ENCODE measurements at regions of chr6 and their contacts with region 1.

Region 1: GRCh38 chr6:26065952-26066380 is 21.3 kb upstream of the HFE start:
- DNase-seq: peak; percentile 73
- ATAC-seq: peak; percentile 92
- H3K4me3 ChIP-seq: 0 out of 2 replicates have a peak overlapping the region, but pooled peaks have one; percentile 24
- H3K27ac ChIP-seq: no peak overlapping the region; the same call in 1 of the 2 replicates
- H3K4me1 ChIP-seq: no peaks in the 10 kb centered on the region
- H3K27me3 ChIP-seq: no peaks in the 10 kb centered on the region
- CTCF ChIP-seq: peak; percentile 88 to 98 (median 89); a peak in 5 of 6 replicates
- EP300 ChIP-seq: no peak
- POLR2A ChIP-seq: no peak
- RAD21 ChIP-seq: peak; percentile 94

Region 2: DNA sequence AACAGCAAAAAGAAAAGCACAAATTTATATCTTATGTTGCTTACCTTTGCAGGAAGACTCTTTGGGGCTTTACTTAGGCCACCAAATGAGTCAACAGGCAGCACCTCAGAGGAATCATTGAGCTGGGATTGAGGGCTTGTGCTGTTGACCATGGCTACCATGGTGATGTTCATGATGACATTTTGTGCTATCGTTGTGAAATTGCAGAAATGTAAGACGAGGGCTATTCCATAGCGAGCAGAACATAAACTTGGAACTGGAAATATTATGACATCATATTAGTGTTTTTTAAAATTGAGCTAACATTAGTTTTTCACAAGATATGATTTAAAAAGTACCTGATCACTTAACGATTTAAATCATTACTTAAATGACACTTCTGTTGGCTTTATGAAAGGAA is 203.8 kb before region 1 on chr6:
- CTCF ChIA-PET with region 1: no interaction called
- POLR2A ChIA-PET with region 1: no interaction called
- RAD21 ChIA-PET with region 1: no interaction called
- SMC1A ChIA-PET with region 1: no interaction called
- in situ Hi-C with region 1: no loop called
- intact Hi-C with region 1: no loop called
- DNase-seq: no peak
- ATAC-seq: no peak
- H3K4me3 ChIP-seq: no peak overlapping the region
- H3K27ac ChIP-seq: no peak overlapping the region
- H3K4me1 ChIP-seq: no peaks in the 10 kb centered on the region
- H3K27me3 ChIP-seq: peaks cover 0 to 2% of the 10 kb centered on the region in 2 experiments; a peak in 3 of 4 replicates
- CTCF ChIP-seq: no peak
- EP300 ChIP-seq: no peak
- POLR2A ChIP-seq: no peak
- RAD21 ChIP-seq: no peak

Region 3: DNA sequence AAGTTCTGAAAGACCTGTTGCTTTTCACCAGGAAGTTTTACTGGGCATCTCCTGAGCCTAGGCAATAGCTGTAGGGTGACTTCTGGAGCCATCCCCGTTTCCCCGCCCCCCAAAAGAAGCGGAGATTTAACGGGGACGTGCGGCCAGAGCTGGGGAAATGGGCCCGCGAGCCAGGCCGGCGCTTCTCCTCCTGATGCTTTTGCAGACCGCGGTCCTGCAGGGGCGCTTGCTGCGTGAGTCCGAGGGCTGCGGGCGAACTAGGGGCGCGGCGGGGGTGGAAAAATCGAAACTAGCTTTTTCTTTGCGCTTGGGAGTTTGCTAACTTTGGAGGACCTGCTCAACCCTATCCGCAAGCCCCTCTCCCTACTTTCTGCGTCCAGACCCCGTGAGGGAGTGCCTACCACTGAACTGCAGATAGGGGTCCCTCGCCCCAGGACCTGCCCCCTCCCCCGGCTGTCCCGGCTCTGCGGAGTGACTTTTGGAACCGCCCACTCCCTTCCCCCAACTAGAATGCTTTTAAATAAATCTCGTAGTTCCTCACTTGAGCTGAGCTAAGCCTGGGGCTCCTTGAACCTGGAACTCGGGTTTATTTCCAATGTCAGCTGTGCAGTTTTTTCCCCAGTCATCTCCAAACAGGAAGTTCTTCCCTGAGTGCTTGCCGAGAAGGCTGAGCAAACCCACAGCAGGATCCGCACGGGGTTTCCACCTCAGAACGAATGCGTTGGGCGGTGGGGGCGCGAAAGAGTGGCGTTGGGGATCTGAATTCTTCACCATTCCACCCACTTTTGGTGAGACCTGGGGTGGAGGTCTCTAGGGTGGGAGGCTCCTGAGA is 21.5 kb after region 1 on chr6 and contains the start of gene HFE:
- CTCF ChIA-PET with region 1: interaction called, 897 read pairs
- POLR2A ChIA-PET with region 1: interaction called, 21 read pairs
- RAD21 ChIA-PET with region 1: interaction called, 286 read pairs
- SMC1A ChIA-PET with region 1: interaction called, 645 read pairs
- in situ Hi-C with region 1: no loop called
- intact Hi-C with region 1: no loop called
- DNase-seq: no peak
- ATAC-seq: peak; percentile 64
- H3K4me3 ChIP-seq: peak within 1 kb of the TSS; percentile 78
- H3K27ac ChIP-seq: peak within 1 kb of the TSS; percentile 75
- H3K4me1 ChIP-seq: peaks cover 15% of the 10 kb centered on the region
- H3K27me3 ChIP-seq: no peaks in the 10 kb centered on the region
- CTCF ChIP-seq: no peak
- EP300 ChIP-seq: no peak
- POLR2A ChIP-seq: no peak
- RAD21 ChIP-seq: no peak
- polyA plus RNA-seq, gene HFE: 0.52 to 1.2 TPM

Region 4: DNA sequence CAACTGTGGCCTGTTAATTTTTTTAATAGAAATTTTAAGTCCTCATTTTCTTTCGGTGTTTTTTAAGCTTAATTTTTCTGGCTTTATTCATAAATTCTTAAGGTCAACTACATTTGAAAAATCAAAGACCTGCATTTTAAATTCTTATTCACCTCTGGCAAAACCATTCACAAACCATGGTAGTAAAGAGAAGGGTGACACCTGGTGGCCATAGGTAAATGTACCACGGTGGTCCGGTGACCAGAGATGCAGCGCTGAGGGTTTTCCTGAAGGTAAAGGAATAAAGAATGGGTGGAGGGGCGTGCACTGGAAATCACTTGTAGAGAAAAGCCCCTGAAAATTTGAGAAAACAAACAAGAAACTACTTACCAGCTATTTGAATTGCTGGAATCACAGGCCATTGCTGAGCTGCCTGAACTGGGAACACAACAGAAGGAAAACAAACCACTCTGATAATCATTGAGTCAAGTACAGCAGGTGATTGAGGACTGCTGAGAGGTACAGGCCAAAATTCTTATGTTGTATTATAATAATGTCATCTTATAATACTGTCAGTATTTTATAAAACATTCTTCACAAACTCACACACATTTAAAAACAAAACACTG is 31.4 kb after region 1 on chr6:
- CTCF ChIA-PET with region 1: interaction called, 897 read pairs
- POLR2A ChIA-PET with region 1: interaction called, 19 read pairs
- RAD21 ChIA-PET with region 1: interaction called, 286 read pairs
- SMC1A ChIA-PET with region 1: interaction called, 645 read pairs
- in situ Hi-C with region 1: loop called (anchors 5 kb)
- intact Hi-C with region 1: loop called (anchors 1 kb)
- DNase-seq: no peak
- ATAC-seq: peak; percentile 92
- H3K4me3 ChIP-seq: no peak overlapping the region
- H3K27ac ChIP-seq: no peak overlapping the region
- H3K4me1 ChIP-seq: peaks cover 4% of the 10 kb centered on the region
- H3K27me3 ChIP-seq: no peaks in the 10 kb centered on the region
- CTCF ChIP-seq: peak; percentile 54 to 82 (median 65); a peak in 5 of 6 replicates
- EP300 ChIP-seq: no peak
- POLR2A ChIP-seq: no peak
- RAD21 ChIP-seq: peak; percentile 96

Region 5: DNA sequence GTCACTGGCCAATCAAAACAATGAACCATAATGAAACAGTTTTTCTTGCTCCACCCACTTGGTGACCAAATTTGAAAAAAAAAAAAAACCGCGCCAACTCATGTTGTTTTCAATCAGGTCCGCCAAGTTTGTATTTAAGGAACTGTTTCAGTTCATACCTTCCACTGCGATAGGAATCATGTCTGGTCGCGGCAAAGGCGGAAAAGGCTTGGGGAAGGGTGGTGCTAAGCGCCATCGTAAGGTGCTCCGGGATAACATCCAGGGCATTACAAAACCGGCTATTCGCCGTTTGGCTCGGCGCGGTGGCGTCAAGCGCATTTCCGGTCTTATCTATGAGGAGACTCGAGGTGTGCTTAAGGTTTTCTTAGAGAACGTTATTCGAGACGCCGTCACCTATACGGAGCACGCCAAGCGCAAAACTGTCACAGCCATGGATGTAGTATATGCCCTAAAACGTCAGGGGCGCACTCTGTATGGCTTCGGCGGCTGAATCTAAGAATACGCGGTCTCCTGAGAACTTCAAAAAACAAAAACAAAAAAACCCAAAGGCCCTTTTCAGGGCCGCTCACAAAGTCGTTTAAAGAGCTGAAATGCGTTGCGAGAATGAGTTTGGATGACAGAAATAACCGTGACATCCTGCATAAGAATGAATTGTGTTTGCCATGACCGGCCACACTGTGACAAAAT is 37.9 kb after region 1 on chr6:
- CTCF ChIA-PET with region 1: interaction called, 897 read pairs
- POLR2A ChIA-PET with region 1: interaction called, 9 read pairs
- RAD21 ChIA-PET with region 1: interaction called, 286 read pairs
- SMC1A ChIA-PET with region 1: interaction called, 645 read pairs
- in situ Hi-C with region 1: loop called (anchors 5 kb)
- intact Hi-C with region 1: loop called (anchors 1 kb)
- DNase-seq: peak; percentile 99
- ATAC-seq: peak; percentile 95
- H3K4me3 ChIP-seq: peak overlapping the region; percentile 63
- H3K27ac ChIP-seq: peak overlapping the region; percentile 79
- H3K4me1 ChIP-seq: no peaks in the 10 kb centered on the region
- H3K27me3 ChIP-seq: no peaks in the 10 kb centered on the region
- CTCF ChIP-seq: peak; percentile 42 to 47 (median 45); a peak in 4 of 6 replicates
- EP300 ChIP-seq: peak; percentile 31 to 93
- POLR2A ChIP-seq: peak; percentile 97
- RAD21 ChIP-seq: peak; percentile 46